ENCODE measurements at regions of chr7 and their contacts with region 1.

Region 1: DNA sequence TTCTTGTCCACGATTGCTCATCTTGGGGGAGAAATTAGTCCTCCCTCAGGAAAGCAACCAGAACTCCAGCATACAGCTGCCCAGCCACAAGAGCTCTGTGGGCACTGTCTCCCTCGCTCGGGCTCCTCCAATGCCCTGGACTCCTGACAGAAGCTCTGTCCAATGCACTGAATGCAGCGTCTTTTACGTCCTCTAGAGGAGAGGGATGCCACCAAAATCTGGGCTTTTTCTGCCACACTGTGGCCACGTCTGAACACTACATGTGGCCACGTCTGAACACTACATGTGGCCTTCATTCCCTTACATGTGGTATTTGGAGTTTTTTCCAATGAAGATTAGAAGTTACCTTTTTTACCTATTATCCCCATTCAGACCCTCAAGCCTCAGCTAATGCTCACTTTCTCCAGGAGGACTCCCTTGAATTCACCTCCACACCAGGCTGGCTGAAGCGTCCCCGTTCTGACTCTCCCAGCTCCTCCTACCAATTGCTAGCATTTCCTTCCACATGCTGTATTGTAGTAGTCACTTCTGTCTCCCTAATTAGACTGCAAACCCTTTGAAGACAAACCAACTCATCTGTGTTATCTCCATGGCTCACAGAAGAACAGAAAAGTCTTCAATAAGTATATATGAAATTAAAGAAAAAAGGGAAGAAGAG is 134.3 kb upstream of the PDE1C start:
- DNase-seq: peak; percentile 19 to 56
- H3K4me3 ChIP-seq: no peak overlapping the region
- H3K27ac ChIP-seq: no peak overlapping the region
- H3K4me1 ChIP-seq: no peaks in the 10 kb centered on the region
- H3K27me3 ChIP-seq: no peaks in the 10 kb centered on the region; a peak in 1 of 7 replicates
- CTCF ChIP-seq: peak; percentile 54 to 98 (median 85)
- EP300 ChIP-seq: no peak
- POLR2A ChIP-seq: no peak
- RAD21 ChIP-seq: peak; percentile 94 to 96

Region 2: DNA sequence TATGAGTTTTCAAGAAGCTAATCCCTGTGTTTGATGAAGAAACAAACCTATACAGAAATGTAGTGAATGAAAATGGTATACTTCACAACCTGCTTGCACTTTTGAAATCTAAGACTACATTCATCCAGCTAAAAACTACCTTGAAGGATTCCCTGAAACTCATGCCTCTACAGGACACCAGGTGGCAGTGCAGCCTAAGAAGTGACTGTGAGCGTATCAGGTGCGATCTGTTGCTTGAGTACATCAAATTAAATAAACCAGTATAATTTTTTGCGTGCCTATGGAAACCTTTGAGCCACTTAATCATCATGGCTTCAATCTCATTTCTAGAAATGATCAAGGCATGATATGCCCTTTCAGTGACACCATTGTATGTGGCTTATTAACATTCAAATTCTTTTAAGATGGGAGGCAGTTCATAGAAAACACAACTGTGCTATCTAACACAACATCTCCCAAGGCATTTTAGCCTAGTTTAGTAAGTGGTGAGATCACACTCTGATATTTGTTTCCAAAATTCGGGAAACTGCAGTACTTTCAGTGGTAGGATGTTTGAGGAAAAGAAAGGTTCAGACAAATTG is 460.1 kb before region 1 on chr7:
- CTCF ChIA-PET with region 1: interaction called, 108 read pairs
- POLR2A ChIA-PET with region 1: no interaction called
- DNase-seq: peak in 1 of 2 experiments; percentile 67
- H3K4me3 ChIP-seq: no peak overlapping the region
- H3K27ac ChIP-seq: no peak overlapping the region
- H3K4me1 ChIP-seq: no peaks in the 10 kb centered on the region
- H3K27me3 ChIP-seq: peaks cover 0 to 6% (median 1%) of the 10 kb centered on the region in 4 experiments; a peak in 4 of 7 replicates
- CTCF ChIP-seq: peak; percentile 45 to 89 (median 76)
- EP300 ChIP-seq: no peak
- POLR2A ChIP-seq: no peak
- RAD21 ChIP-seq: peak; percentile 98

Region 3: GRCh38 chr7:31782411-31782991 is 422.0 kb before region 1 on chr7:
- CTCF ChIA-PET with region 1: interaction called, 60 read pairs
- POLR2A ChIA-PET with region 1: no interaction called
- DNase-seq: no peak
- H3K4me3 ChIP-seq: no peak overlapping the region
- H3K27ac ChIP-seq: no peak overlapping the region
- H3K4me1 ChIP-seq: no peaks in the 10 kb centered on the region
- H3K27me3 ChIP-seq: peaks cover 5 to 38% (median 27%) of the 10 kb centered on the region in 4 experiments
- CTCF ChIP-seq: peak in 2 of 3 experiments; percentile 81 to 83; a peak in 3 of 4 replicates
- EP300 ChIP-seq: no peak
- POLR2A ChIP-seq: no peak
- RAD21 ChIP-seq: peak; percentile 71 to 74

Region 4: DNA sequence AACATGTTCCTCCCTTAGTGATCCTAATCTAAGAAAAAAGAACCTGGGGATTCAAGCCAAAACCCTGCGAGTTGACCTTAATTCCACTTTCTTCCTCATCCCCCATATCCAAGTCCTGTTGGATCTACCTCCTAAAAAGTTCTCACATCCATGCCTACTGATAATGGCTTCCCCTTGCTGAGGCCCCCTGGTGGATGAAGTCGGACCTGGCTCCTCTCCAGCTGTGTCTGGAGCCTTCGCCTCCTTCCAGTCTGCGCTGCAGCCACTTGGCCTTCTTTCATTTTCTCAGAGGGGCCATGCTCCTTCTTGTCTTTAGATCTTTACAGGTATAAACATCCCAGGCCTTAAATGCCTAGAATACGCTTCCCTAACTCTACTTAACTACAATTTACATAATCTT is 142.3 kb before region 1 on chr7:
- CTCF ChIA-PET with region 1: interaction called, 43 read pairs
- POLR2A ChIA-PET with region 1: no interaction called
- DNase-seq: peak in 1 of 2 experiments; percentile 86
- H3K4me3 ChIP-seq: no peak overlapping the region
- H3K27ac ChIP-seq: no peak overlapping the region
- H3K4me1 ChIP-seq: peaks cover 0 to 7% (median 5%) of the 10 kb centered on the region in 4 experiments; a peak in 4 of 7 replicates
- H3K27me3 ChIP-seq: peaks cover 0 to 2% (median under 1%) of the 10 kb centered on the region in 4 experiments; a peak in 2 of 7 replicates
- CTCF ChIP-seq: peak; percentile 73 to 88 (median 82)
- EP300 ChIP-seq: no peak
- POLR2A ChIP-seq: no peak
- RAD21 ChIP-seq: peak; percentile 64 to 75

Region 5: DNA sequence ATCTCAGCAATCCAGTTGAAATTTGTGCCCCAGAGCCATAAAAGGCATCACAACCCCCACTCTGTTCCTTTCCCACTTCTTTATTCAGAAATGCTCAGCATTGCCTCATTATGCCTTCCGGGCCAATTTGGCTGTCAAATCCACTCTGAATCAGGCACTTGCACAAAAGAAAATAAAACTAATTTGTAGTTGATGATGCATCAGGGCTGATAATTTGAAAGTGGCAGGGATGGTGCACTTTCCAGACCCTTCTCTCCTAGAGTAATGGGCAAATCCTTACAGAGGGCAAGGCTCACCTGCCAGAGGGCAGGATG is 13.6 kb after region 1 on chr7:
- CTCF ChIA-PET with region 1: interaction called, 59 read pairs
- POLR2A ChIA-PET with region 1: no interaction called
- DNase-seq: peak in 1 of 2 experiments; percentile 17
- H3K4me3 ChIP-seq: no peak overlapping the region
- H3K27ac ChIP-seq: no peak overlapping the region
- H3K4me1 ChIP-seq: no peaks in the 10 kb centered on the region
- H3K27me3 ChIP-seq: no peaks in the 10 kb centered on the region
- CTCF ChIP-seq: no peak
- EP300 ChIP-seq: no peak
- POLR2A ChIP-seq: no peak
- RAD21 ChIP-seq: no peak

Region 6: GRCh38 chr7:32479574-32480200 is 275.2 kb after region 1 on chr7:
- CTCF ChIA-PET with region 1: interaction called, 25 read pairs
- POLR2A ChIA-PET with region 1: no interaction called
- DNase-seq: peak in 1 of 2 experiments; percentile 55
- H3K4me3 ChIP-seq: no peak overlapping the region
- H3K27ac ChIP-seq: no peak overlapping the region
- H3K4me1 ChIP-seq: no peaks in the 10 kb centered on the region
- H3K27me3 ChIP-seq: no peaks in the 10 kb centered on the region
- CTCF ChIP-seq: peak in 2 of 3 experiments; percentile 91; a peak in 3 of 4 replicates
- EP300 ChIP-seq: no peak
- POLR2A ChIP-seq: no peak
- RAD21 ChIP-seq: peak; percentile 98